PC-9 (cell line): ENCODE measurements at regions of chr1 and their contacts with region 1.

Region 1: DNA sequence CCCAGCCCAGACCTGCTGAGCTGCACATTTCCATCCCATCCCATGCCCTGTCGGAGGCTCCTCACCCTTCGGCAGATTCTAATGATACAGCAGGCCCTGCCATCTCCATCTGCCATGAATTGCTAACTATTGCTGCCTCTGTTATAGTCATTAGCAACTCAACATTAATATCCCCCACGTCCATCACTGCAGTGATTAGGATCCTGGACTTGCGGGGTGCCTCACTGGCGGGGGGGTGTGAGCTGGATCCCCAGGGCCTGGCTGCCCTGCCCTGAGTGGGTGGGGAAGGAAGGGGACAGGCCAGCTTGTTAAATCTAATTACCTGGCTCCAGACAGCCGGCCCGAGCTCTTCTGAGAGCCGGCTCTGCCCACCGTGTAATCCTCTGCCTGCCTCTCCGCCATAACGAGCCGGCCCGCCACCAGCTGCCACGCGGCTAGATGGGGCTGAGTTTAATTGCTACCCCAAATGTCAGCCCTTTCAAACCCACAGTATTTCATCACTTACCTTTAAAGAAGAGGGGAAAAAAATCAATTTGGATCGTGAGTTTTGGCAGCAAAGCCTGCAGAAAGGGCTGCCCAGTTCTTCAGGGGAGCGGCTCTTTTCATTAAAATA is 227.3 kb upstream of the CSF3R start:
- DNase-seq: no peak
- H3K4me3 ChIP-seq: no peak overlapping the region
- H3K27ac ChIP-seq: no peak overlapping the region
- H3K4me1 ChIP-seq: peaks cover 17% of the 10 kb centered on the region; the same call in 1 of the 2 replicates
- H3K27me3 ChIP-seq: peaks cover 73% of the 10 kb centered on the region
- CTCF ChIP-seq: no peak

Region 2: DNA sequence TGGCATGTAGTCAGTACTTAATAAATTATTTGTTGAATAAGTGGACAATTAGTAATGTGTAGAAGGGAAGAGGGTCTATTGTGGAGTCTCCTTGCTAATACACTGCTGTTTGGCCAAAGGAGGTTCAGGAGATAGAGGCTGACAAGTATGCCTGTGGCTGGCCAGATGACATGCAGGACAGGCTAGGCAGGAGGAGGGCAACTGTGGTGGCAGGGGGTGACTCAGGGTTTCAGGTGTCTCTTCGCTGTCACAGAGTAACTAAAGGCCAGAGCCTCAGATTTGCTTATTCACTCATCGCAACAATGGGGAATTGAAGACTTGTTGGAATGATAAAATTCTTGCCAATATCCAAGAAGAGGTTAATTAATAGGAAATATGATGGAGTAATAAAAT is 452.6 kb before region 1 on chr1:
- CTCF ChIA-PET with region 1: interaction called, 14 read pairs
- POLR2A ChIA-PET with region 1: no interaction called
- intact Hi-C with region 1: no loop called
- DNase-seq: peak; percentile 85 to 86
- H3K4me3 ChIP-seq: peak overlapping the region; percentile 35; the same call in 1 of the 2 replicates
- H3K27ac ChIP-seq: peak overlapping the region; percentile 99
- H3K4me1 ChIP-seq: peaks cover 54% of the 10 kb centered on the region
- H3K27me3 ChIP-seq: no peaks in the 10 kb centered on the region
- CTCF ChIP-seq: no peak

Region 3: GRCh38 chr1:36486436-36487335 is 223.3 kb before region 1 on chr1:
- CTCF ChIA-PET with region 1: no interaction called
- POLR2A ChIA-PET with region 1: no interaction called
- intact Hi-C with region 1: no loop called
- DNase-seq: peak; percentile 90 to 97
- H3K4me3 ChIP-seq: peak overlapping the region; percentile 34; the same call in 1 of the 2 replicates
- H3K27ac ChIP-seq: peak overlapping the region; percentile 90
- H3K4me1 ChIP-seq: peaks cover 34% of the 10 kb centered on the region
- H3K27me3 ChIP-seq: no peaks in the 10 kb centered on the region
- CTCF ChIP-seq: no peak

Region 4: GRCh38 chr1:36836196-36836883 is 126.4 kb after region 1 on chr1:
- CTCF ChIA-PET with region 1: no interaction called
- POLR2A ChIA-PET with region 1: no interaction called
- intact Hi-C with region 1: no loop called
- DNase-seq: no peak
- H3K4me3 ChIP-seq: no peak overlapping the region
- H3K27ac ChIP-seq: peak overlapping the region; percentile 68
- H3K4me1 ChIP-seq: peaks cover 31% of the 10 kb centered on the region
- H3K27me3 ChIP-seq: peaks cover 16% of the 10 kb centered on the region; the same call in 1 of the 2 replicates
- CTCF ChIP-seq: no peak

Region 5: GRCh38 chr1:36963006-36963405 is 253.0 kb after region 1 on chr1:
- CTCF ChIA-PET with region 1: no interaction called
- POLR2A ChIA-PET with region 1: no interaction called
- intact Hi-C with region 1: no loop called
- DNase-seq: no peak
- H3K4me3 ChIP-seq: no peak overlapping the region
- H3K27ac ChIP-seq: no peak overlapping the region
- H3K4me1 ChIP-seq: no peaks in the 10 kb centered on the region
- H3K27me3 ChIP-seq: peaks cover 37% of the 10 kb centered on the region
- CTCF ChIP-seq: no peak